ENCODE measurements at regions of chr3 and their contacts with region 1.

Region 1: GRCh38 chr3:101902041-101902440 is 52.7 kb downstream of the NFKBIZ start:
- DNase-seq: no peak
- ATAC-seq: peak; percentile 42
- H3K4me3 ChIP-seq: no peak overlapping the region
- H3K27ac ChIP-seq: no peak overlapping the region
- H3K4me1 ChIP-seq: peaks cover 26% of the 10 kb centered on the region
- H3K27me3 ChIP-seq: no peaks in the 10 kb centered on the region
- CTCF ChIP-seq: no peak
- EP300 ChIP-seq: no peak
- POLR2A ChIP-seq: no peak
- RAD21 ChIP-seq: no peak

Region 2: GRCh38 chr3:101827211-101828174 is 74.5 kb before region 1 on chr3:
- CTCF ChIA-PET with region 1: interaction called, 4 read pairs
- POLR2A ChIA-PET with region 1: interaction called, 4 read pairs
- RAD21 ChIA-PET with region 1: interaction called, 8 read pairs
- SMC1A ChIA-PET with region 1: interaction called, 25 read pairs
- in situ Hi-C with region 1: no loop called
- intact Hi-C with region 1: loop called (anchors 2 kb)
- DNase-seq: peak; percentile 93
- ATAC-seq: peak; percentile 83
- H3K4me3 ChIP-seq: peak overlapping the region; percentile 78
- H3K27ac ChIP-seq: peak overlapping the region; percentile 92
- H3K4me1 ChIP-seq: peaks cover 11% of the 10 kb centered on the region
- H3K27me3 ChIP-seq: no peaks in the 10 kb centered on the region
- CTCF ChIP-seq: no peak
- EP300 ChIP-seq: peak; percentile 36 to 84
- POLR2A ChIP-seq: peak; percentile 92
- RAD21 ChIP-seq: peak; percentile 38; the same call in 1 of the 2 replicates

Region 3: DNA sequence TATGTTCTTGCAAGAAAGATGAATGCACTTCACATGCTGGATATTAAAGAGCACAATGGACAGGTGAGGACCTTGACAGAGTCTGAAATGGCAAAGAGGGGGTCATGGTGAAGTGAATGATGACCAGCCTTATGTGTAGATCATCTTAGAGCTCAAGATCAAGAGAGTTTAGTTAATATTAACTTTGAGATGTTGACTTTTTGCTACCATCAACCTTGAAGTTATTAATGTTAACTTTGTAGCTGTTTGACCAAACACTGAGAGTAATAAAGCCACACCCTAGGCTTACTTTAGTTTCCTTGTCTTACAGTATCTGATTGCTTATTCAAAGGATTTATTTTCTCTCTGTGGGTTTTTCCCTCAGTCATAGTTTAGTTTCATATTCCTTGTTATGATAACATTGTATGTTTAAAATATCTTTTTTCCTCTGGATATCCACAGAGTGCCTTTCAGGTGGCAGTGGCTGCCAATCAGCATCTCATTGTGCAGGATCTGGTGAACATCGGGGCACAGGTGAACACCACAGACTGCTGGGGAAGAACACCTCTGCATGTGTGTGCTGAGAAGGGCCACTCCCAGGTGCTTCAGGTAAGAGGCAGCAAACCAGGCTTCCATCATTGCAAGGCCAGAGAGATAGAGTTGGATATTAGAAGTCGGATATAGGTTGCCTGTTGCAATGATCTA is 47.3 kb before region 1 on chr3:
- CTCF ChIA-PET with region 1: interaction called, 6 read pairs
- POLR2A ChIA-PET with region 1: interaction called, 11 read pairs
- RAD21 ChIA-PET with region 1: interaction called, 13 read pairs
- SMC1A ChIA-PET with region 1: interaction called, 33 read pairs
- in situ Hi-C with region 1: no loop called
- intact Hi-C with region 1: loop called (anchors 2 kb)
- DNase-seq: no peak
- ATAC-seq: no peak
- H3K4me3 ChIP-seq: no peak overlapping the region
- H3K27ac ChIP-seq: no peak overlapping the region
- H3K4me1 ChIP-seq: peaks cover 17% of the 10 kb centered on the region
- H3K27me3 ChIP-seq: no peaks in the 10 kb centered on the region
- CTCF ChIP-seq: no peak
- EP300 ChIP-seq: no peak
- POLR2A ChIP-seq: no peak
- RAD21 ChIP-seq: no peak

Region 4: GRCh38 chr3:101890716-101891115 is 11.3 kb before region 1 on chr3:
- CTCF ChIA-PET with region 1: interaction called, 3 read pairs
- POLR2A ChIA-PET with region 1: interaction called, 3 read pairs
- RAD21 ChIA-PET with region 1: interaction called, 3 read pairs
- SMC1A ChIA-PET with region 1: interaction called, 10 read pairs
- in situ Hi-C with region 1: no loop called
- intact Hi-C with region 1: no loop called
- DNase-seq: no peak
- ATAC-seq: peak; percentile 93
- H3K4me3 ChIP-seq: no peak overlapping the region
- H3K27ac ChIP-seq: no peak overlapping the region
- H3K4me1 ChIP-seq: no peaks in the 10 kb centered on the region
- H3K27me3 ChIP-seq: no peaks in the 10 kb centered on the region
- CTCF ChIP-seq: no peak
- EP300 ChIP-seq: no peak
- POLR2A ChIP-seq: no peak
- RAD21 ChIP-seq: no peak

Region 5: DNA sequence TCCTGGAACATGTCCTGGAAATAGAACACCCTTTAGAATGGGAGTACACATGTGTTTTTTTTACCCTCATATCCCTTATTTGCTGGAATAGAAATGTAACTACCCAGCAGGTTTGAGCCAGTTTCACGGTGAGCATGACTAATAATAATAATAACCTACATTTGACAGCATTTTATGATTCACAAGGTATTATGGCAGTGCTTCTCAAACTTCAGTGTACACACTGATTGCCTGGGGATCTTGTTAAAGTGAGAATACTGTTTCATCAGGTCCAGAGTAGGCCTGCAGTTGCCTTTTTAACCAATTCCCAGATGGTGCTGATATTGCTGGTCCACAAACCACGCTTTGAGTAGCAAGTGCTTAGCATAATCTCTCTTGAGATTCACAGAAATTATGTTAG is 11.1 kb after region 1 on chr3:
- CTCF ChIA-PET with region 1: interaction called, 3 read pairs
- POLR2A ChIA-PET with region 1: interaction called, 3 read pairs
- RAD21 ChIA-PET with region 1: no interaction called
- SMC1A ChIA-PET with region 1: interaction called, 13 read pairs
- in situ Hi-C with region 1: no loop called
- intact Hi-C with region 1: no loop called
- DNase-seq: no peak
- ATAC-seq: peak; percentile 49
- H3K4me3 ChIP-seq: no peak overlapping the region
- H3K27ac ChIP-seq: no peak overlapping the region
- H3K4me1 ChIP-seq: no peaks in the 10 kb centered on the region
- H3K27me3 ChIP-seq: no peaks in the 10 kb centered on the region
- CTCF ChIP-seq: no peak
- EP300 ChIP-seq: no peak
- POLR2A ChIP-seq: no peak
- RAD21 ChIP-seq: no peak

Region 6: DNA sequence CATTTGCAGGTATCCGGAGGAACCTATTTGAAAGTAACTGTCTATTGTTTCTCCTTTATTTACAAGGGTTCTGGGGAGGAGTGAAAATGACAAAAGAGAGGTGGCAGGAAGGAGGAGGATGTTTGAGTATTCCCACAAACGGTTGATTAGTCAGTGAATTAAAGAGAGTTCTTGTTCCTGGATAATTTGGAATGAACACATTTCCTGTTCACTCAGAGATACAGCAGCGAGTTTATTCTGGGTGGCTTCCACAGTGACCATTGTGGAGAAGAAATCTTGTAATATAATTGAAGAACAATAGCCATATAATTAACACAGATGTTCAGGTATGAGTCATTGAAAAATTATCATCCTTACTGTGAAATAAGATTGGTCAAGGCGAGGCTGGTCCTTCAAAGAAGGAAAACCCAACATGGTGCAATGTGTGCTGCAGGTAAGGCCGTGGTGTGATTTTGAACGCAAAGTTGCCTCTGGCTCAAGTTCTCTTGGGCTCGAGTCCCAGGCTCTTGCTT is 24.6 kb after region 1 on chr3:
- CTCF ChIA-PET with region 1: interaction called, 11 read pairs
- POLR2A ChIA-PET with region 1: interaction called, 13 read pairs
- RAD21 ChIA-PET with region 1: interaction called, 15 read pairs
- SMC1A ChIA-PET with region 1: interaction called, 25 read pairs
- in situ Hi-C with region 1: no loop called
- intact Hi-C with region 1: no loop called
- DNase-seq: no peak
- ATAC-seq: no peak
- H3K4me3 ChIP-seq: no peak overlapping the region
- H3K27ac ChIP-seq: no peak overlapping the region
- H3K4me1 ChIP-seq: no peaks in the 10 kb centered on the region; the same call in 1 of the 2 replicates
- H3K27me3 ChIP-seq: no peaks in the 10 kb centered on the region
- CTCF ChIP-seq: no peak
- EP300 ChIP-seq: no peak
- POLR2A ChIP-seq: no peak
- RAD21 ChIP-seq: no peak

Region 7: DNA sequence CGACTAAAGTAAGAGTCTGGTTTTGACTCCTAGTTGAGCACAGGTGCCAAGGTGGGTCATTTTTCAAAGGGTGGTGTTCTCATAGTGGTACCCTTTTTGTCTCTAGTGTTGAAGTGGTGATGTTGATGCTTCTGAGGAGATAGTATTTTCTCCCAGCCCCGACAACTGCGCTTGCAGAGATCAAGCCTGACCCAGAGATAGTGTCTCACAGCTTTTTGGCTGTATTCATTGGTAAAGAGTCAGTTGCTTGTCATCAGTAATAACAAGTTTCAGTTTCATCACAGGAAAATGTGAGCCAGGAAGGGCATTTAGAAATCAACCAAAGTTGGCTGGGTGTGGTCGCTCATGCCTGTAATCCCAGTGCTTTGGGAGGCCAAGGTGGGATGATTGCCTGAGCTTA is 86.5 kb after region 1 on chr3:
- CTCF ChIA-PET with region 1: interaction called, 3 read pairs
- POLR2A ChIA-PET with region 1: no interaction called
- RAD21 ChIA-PET with region 1: no interaction called
- SMC1A ChIA-PET with region 1: interaction called, 4 read pairs
- in situ Hi-C with region 1: no loop called
- intact Hi-C with region 1: loop called (anchors 1 kb)
- DNase-seq: no peak
- ATAC-seq: peak; percentile 65
- H3K4me3 ChIP-seq: no peak overlapping the region
- H3K27ac ChIP-seq: peak overlapping the region; percentile 59
- H3K4me1 ChIP-seq: peaks cover 28% of the 10 kb centered on the region
- H3K27me3 ChIP-seq: no peaks in the 10 kb centered on the region
- CTCF ChIP-seq: no peak
- EP300 ChIP-seq: 0 out of 4 replicates have a peak, but pooled peaks of 1 of the 2 experiments have one; percentile 30
- POLR2A ChIP-seq: no peak
- RAD21 ChIP-seq: no peak

Region 8: GRCh38 chr3:102024270-102024904 is 122.3 kb after region 1 on chr3:
- CTCF ChIA-PET with region 1: no interaction called
- POLR2A ChIA-PET with region 1: no interaction called
- RAD21 ChIA-PET with region 1: no interaction called
- SMC1A ChIA-PET with region 1: no interaction called
- in situ Hi-C with region 1: no loop called
- intact Hi-C with region 1: no loop called
- DNase-seq: no peak
- ATAC-seq: peak; percentile 59
- H3K4me3 ChIP-seq: no peak overlapping the region
- H3K27ac ChIP-seq: no peak overlapping the region
- H3K4me1 ChIP-seq: no peaks in the 10 kb centered on the region
- H3K27me3 ChIP-seq: no peaks in the 10 kb centered on the region
- CTCF ChIP-seq: no peak
- EP300 ChIP-seq: no peak
- POLR2A ChIP-seq: no peak
- RAD21 ChIP-seq: no peak